AG04450 (cell line): ENCODE measurements at regions of chr3 and their contacts with region 1.

Region 1: GRCh38 chr3:98602078-98602678 is 8.8 kb upstream of the CPOX start:
- DNase-seq: peak; percentile 47
- H3K4me3 ChIP-seq: no peak overlapping the region
- H3K27ac ChIP-seq: no peak overlapping the region
- H3K27me3 ChIP-seq: no peaks in the 10 kb centered on the region
- CTCF ChIP-seq: peak; percentile 85

Region 2: GRCh38 chr3:98650971-98651779 is 49.0 kb after region 1 on chr3:
- CTCF ChIA-PET with region 1: no interaction called
- POLR2A ChIA-PET with region 1: no interaction called
- DNase-seq: no peak
- H3K4me3 ChIP-seq: no peak overlapping the region
- H3K27ac ChIP-seq: no peak overlapping the region
- H3K27me3 ChIP-seq: no peaks in the 10 kb centered on the region
- CTCF ChIP-seq: no peak

Region 3: GRCh38 chr3:98705706-98706105 is 103.5 kb after region 1 on chr3:
- CTCF ChIA-PET with region 1: interaction called, 13 read pairs
- POLR2A ChIA-PET with region 1: no interaction called
- DNase-seq: no peak
- H3K4me3 ChIP-seq: no peak overlapping the region
- H3K27ac ChIP-seq: no peak overlapping the region
- H3K27me3 ChIP-seq: no peaks in the 10 kb centered on the region
- CTCF ChIP-seq: 0 out of 2 replicates have a peak, but pooled peaks have one; percentile 8

Region 4: GRCh38 chr3:98778852-98779413 is 176.8 kb after region 1 on chr3:
- CTCF ChIA-PET with region 1: interaction called, 16 read pairs
- POLR2A ChIA-PET with region 1: no interaction called
- DNase-seq: peak; percentile 79
- H3K4me3 ChIP-seq: no peak overlapping the region
- H3K27ac ChIP-seq: peak overlapping the region; percentile 87
- H3K27me3 ChIP-seq: no peaks in the 10 kb centered on the region
- CTCF ChIP-seq: no peak

Region 5: DNA sequence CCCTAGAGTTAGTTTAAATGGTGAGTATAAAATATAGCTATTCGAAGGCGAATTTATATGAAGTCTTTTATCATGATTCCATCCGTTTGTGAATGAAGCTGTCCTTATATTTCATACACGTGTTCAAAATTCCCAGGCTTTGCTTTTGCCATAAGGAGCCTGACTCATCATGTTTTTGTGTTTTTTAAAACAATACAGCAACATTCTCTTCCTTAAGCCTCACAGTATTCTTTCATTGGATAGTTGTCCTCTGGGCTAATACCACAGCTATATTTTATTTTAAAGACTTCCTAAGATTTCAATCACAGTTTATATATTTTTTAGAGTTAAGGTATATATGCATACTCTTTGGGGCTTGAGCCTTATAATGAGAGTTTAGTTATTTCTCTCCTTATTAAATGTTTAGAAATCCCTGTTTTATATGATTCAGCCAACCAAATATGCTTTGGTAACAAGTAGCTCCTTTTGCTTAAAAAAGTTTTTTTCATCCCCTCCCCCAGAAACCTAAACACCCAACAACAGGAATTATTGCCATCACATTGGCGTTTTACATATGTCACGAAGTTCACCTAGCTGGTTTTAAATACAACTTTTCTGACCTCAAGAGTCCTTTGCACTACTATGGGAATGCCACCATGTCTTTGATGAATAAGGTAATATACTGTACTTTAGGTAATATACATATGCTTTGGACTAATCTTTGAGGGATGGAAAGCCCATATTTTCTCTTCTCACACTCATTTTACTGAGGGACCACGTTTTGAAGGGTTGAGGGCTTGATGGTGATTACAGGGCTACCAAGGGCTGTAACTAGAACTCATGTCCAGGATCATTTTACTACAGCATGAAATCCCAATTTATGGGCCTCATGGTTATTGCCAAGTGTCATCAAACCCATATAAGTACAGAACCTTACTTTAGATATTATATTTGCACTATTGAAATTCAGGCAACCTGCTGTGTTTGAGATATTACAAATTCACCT is 189.5 kb after region 1 on chr3:
- CTCF ChIA-PET with region 1: interaction called, 20 read pairs
- POLR2A ChIA-PET with region 1: no interaction called
- DNase-seq: no peak
- H3K4me3 ChIP-seq: no peak overlapping the region
- H3K27ac ChIP-seq: no peak overlapping the region
- H3K27me3 ChIP-seq: no peaks in the 10 kb centered on the region
- CTCF ChIP-seq: no peak

Region 6: GRCh38 chr3:98798820-98799219 is 196.6 kb after region 1 on chr3:
- CTCF ChIA-PET with region 1: interaction called, 20 read pairs
- POLR2A ChIA-PET with region 1: no interaction called
- DNase-seq: no peak
- H3K4me3 ChIP-seq: no peak overlapping the region
- H3K27ac ChIP-seq: no peak overlapping the region
- H3K27me3 ChIP-seq: no peaks in the 10 kb centered on the region
- CTCF ChIP-seq: no peak